Sigmoid colon (tissue), 7 donors: ENCODE measurements at regions of chr7 and their contacts with region 1.

Region 1: GRCh38 chr7:151057989-151058780 is 488 bp upstream of the CDK5 start:
- DNase-seq: peak; percentile 100
- H3K4me3 ChIP-seq: peak overlapping the region; percentile 68 to 91 (median 78)
- H3K27ac ChIP-seq: peak overlapping the region; percentile 86 to 96 (median 93)
- H3K4me1 ChIP-seq: peaks cover 0 to 56% (median 49%) of the 10 kb centered on the region in 4 donors
- H3K27me3 ChIP-seq: no peaks in the 10 kb centered on the region
- CTCF ChIP-seq: no peak
- EP300 ChIP-seq: peak in 2 of 4 donors; percentile 7 to 33
- POLR2A ChIP-seq: peak; percentile 58 to 60

Region 2: DNA sequence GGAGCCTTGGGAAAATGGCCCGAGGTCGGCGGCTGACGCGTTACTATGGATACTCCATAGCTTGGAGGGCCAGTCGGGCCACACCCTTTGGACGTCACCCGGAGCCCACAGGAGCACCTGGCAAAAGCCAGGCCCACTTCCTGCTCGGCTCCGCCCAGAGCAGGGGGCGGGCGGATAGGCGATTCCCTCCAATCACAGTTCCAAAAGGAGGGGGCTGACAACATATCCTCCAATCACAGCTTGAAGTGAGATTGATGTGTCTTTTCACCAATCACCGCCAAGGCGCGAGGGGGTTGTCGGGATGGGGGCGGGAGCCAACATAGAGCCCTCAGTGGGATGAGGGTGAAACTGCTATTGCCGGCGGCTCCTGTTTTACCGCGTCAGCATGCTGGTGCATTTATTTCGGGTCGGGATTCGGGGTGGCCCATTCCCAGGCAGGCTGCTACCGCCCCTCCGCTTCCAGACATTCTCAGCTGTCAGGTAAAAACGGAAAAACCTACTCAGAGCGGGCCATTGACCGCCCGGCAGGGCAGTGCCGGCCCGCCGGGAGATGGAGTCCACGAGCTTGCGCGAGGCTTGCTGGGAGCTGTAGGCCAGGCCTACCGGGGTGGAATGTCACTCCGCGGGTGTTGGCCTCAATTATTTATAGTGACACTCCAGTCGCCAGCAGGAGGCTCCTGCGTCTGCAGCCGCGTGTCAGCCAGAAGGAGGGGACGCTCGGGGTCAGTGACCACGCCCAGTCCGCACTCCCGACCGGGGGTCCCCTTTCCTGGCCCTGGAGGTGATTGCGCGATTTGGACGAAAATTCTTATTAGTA is 29.8 kb before region 1 on chr7 and contains the start of gene ABCB8:
- intact Hi-C with region 1: loop called (anchors 2 kb)
- DNase-seq: peak; percentile 99
- H3K4me3 ChIP-seq: peak within 1 kb of the TSS; percentile 62 to 77 (median 68)
- H3K27ac ChIP-seq: peak within 1 kb of the TSS; percentile 82 to 89 (median 84)
- H3K4me1 ChIP-seq: peaks cover 0 to 23% (median 15%) of the 10 kb centered on the region in 4 donors
- H3K27me3 ChIP-seq: no peaks in the 10 kb centered on the region
- CTCF ChIP-seq: peak; percentile 24 to 61 (median 38)
- EP300 ChIP-seq: peak in 1 of 4 donors; percentile 39
- POLR2A ChIP-seq: peak in 1 of 2 donors; percentile 16
- total RNA-seq, gene ABCB8: 9.7 to 20.8 (median 19.5) TPM

Region 3: DNA sequence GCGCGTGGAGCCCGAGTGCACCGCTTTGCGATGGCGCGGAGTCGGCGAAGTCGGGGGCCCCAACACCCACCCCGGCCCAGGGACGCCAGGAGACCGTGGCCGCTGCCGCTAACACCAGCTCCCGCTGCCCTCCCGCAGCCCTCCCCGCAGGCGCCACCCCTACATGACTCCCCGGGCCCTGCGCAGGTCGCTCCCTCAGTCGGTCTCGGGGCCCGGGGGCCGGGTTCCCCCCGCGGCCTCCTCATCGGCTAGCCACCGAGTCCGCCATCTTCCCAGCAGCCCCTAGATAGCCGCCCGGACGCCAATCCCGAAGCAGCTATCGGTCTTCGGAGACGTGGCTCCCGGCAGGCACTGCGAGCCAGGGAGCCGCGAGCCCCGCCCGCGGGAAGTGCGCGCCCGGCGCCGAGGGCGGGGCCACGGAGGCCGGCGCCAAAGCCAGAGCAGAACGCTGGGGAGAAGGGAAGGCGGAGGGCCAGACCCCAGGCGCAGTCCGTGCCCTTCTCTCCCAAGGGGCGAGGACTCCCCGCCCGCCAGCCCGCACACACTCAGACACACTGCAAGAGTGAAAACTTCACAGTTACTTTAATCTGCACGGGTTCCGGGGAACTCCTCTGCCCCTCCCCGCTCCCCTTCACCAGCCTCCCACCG is 22.5 kb after region 1 on chr7 and contains the start of gene FASTK:
- intact Hi-C with region 1: loop called (anchors 1 kb)
- DNase-seq: peak; percentile 95
- H3K4me3 ChIP-seq: peak within 1 kb of the TSS; percentile 82 to 99 (median 88)
- H3K27ac ChIP-seq: peak within 1 kb of the TSS; percentile 92 to 98 (median 96)
- H3K4me1 ChIP-seq: peaks cover 0 to 65% (median 63%) of the 10 kb centered on the region in 4 donors
- H3K27me3 ChIP-seq: no peaks in the 10 kb centered on the region
- CTCF ChIP-seq: no peak
- EP300 ChIP-seq: no peak
- POLR2A ChIP-seq: peak in 1 of 2 donors; percentile 30
- total RNA-seq, gene FASTK: 61.5 to 80.0 (median 69.9) TPM

Region 4: DNA sequence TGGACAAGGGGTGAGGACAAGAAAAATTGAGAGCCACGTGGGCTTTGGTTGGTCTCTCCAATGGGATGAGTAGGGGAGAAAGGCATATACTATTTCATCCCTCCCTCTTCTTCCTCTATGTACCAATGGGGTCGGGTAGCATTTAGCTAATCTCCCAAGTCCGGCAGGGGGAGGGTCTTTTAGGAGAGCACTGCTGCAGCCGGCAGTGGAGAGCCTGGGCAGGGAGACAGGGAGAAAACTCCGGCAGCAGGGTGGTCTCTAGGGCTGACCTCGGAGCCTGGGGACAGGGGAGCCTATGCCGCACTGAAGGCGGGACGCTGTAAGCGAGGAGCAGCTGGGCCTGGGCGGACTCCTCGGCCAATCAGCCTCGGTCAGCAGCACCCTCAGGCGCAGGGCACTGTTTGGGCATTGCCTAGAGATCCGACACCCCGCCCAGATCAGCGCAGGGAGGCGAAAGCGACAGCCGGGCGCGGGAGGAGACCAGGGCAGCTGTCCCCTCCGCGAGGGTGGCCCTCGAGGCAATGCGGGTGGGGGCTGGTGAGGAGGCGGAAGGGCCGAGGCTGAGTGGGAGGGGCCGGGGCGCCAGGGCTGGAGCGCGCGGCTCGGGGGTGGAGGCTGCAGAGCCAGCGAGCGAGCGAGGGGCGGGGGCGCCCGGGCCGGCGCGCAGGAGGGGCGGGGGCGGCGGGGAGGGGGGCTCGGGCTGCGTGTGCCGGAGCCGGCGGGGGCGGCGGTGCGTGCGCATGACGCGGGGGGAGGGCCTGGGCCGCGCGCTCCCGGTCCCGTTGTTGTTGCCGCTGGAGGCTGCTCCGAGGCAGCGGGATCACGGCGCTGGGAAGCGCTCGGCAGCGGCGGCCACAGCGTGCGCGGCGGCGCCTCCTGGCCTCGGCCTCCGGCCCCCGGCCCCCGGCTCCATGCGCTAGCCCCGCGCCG is 27.8 kb after region 1 on chr7 and contains the start of gene AGAP3:
- intact Hi-C with region 1: loop called (anchors 1 kb)
- DNase-seq: peak; percentile 94
- H3K4me3 ChIP-seq: peak within 1 kb of the TSS; percentile 59 to 89 (median 74)
- H3K27ac ChIP-seq: peak within 1 kb of the TSS; percentile 86 to 96 (median 88)
- H3K4me1 ChIP-seq: peaks cover 0 to 72% (median 67%) of the 10 kb centered on the region in 4 donors
- H3K27me3 ChIP-seq: no peaks in the 10 kb centered on the region
- CTCF ChIP-seq: no peak
- EP300 ChIP-seq: no peak
- POLR2A ChIP-seq: peak in 1 of 2 donors; percentile 69
- total RNA-seq, gene AGAP3: 34.2 to 89.7 (median 40.9) TPM

Region 5: GRCh38 chr7:151110941-151111645 is 52.9 kb after region 1 on chr7:
- intact Hi-C with region 1: loop called (anchors 2 kb)
- DNase-seq: peak; percentile 90
- H3K4me3 ChIP-seq: no peak overlapping the region
- H3K27ac ChIP-seq: peak overlapping the region in 2 of 4 donors; percentile 10 to 70
- H3K4me1 ChIP-seq: peaks cover 0 to 54% (median 51%) of the 10 kb centered on the region in 4 donors
- H3K27me3 ChIP-seq: no peaks in the 10 kb centered on the region
- CTCF ChIP-seq: peak; percentile 83 to 88 (median 86)
- EP300 ChIP-seq: no peak
- POLR2A ChIP-seq: no peak

Region 6: DNA sequence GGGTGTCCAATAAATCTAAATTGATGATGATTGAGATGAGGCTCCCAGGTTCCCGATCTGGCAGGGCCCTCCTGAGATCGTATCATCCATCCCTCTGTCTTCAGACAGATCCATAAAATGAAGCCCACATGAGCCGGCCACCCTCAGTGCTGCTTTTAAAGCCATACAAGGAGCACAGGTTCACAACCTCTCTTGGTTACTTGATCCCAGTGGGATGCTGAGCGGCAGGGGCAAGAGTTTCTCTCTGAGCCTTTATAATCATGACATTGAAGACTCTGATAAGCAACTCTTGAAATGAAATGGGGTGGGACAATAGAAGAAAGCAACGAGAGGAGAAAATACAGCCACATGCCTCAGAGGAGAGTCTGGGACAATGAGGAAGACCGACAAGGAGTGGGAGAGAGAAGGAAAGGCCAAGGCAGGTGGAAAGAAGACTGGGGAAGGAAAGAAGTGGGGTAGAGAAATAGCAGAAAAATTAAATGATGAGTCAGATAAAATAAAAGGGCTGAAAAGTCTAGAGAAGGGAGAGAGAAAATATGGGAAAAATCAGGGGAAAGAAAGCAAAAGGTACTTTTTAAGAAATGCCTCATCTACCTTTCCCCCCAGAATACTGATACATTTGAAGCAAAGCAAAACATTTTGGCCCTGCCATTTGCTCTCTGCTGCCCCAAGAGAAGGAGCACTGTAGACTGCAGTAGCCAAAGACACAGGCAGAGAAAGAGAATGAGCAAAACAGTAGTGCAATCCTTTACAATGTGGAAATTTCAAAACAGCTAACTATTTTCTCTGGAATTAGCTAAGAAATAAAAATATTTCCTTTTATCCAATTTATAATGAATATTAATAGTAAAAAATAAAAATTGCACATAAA is 94.7 kb after region 1 on chr7:
- intact Hi-C with region 1: no loop called
- DNase-seq: no peak
- H3K4me3 ChIP-seq: no peak overlapping the region
- H3K27ac ChIP-seq: no peak overlapping the region
- H3K4me1 ChIP-seq: no peaks in the 10 kb centered on the region
- H3K27me3 ChIP-seq: peaks cover 10 to 59% (median 47%) of the 10 kb centered on the region in 3 donors
- CTCF ChIP-seq: no peak
- EP300 ChIP-seq: no peak
- POLR2A ChIP-seq: no peak